ENCODE measurements at regions of chr10 and their contacts with region 1.

Region 1: GRCh38 chr10:26528715-26529393 is 90.7 kb downstream of the APBB1IP start:
- DNase-seq: no peak
- H3K4me3 ChIP-seq: no peak overlapping the region
- H3K27ac ChIP-seq: peak overlapping the region in 4 of 8 donors; percentile 60 to 76 (median 67)
- H3K4me1 ChIP-seq: peaks cover 0 to 32% (median 3%) of the 10 kb centered on the region in 6 donors
- H3K27me3 ChIP-seq: no peaks in the 10 kb centered on the region
- CTCF ChIP-seq: no peak
- POLR2A ChIP-seq: no peak

Region 2: DNA sequence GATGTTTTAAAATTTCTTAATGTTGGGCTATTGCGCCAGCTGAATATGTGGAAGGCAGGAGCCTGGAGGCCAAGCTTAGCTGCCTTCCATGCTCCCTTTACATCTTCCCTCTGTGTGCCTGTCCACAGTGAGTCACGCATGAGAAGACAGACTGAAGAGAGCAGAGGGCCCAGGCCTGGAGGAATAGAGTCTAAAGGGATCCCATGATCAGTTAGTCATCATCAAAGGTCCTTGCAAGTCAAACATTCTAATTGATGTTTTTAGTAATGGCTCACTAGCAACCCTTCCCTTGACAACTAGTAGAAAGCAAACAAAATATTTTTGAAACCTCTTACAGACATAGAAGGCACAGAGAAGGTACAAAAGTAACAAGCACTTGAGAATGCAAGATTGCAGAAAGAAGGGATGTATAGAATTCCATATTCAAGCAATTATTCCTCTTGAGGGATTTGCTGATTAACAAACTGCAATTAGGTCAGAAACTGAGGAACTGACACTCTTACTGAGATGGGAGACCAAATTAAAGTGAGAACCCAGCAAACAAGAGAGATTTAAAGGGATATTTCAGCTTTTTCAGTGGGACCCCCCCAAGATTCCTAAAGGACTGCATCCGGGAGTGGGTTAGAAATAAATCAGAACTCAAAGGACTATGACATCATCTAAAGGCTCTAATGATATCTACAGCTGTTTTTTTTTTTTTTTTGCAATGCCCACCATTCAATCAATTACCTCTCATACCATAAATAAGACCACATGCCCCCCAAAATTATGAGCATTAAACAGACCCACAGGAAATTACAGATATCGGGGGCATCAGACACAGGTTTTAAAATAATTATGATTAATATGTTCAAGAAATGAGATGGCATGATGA is 121.2 kb before region 1 on chr10:
- intact Hi-C with region 1: loop called (anchors 10 kb)
- DNase-seq: no peak
- H3K4me3 ChIP-seq: no peak overlapping the region
- H3K27ac ChIP-seq: no peak overlapping the region
- H3K4me1 ChIP-seq: peaks cover 0 to 11% (median 0%) of the 10 kb centered on the region in 6 donors
- H3K27me3 ChIP-seq: no peaks in the 10 kb centered on the region
- CTCF ChIP-seq: no peak
- POLR2A ChIP-seq: no peak

Region 3: GRCh38 chr10:26642896-26643653 is 114.2 kb after region 1 on chr10:
- intact Hi-C with region 1: no loop called
- DNase-seq: no peak
- H3K4me3 ChIP-seq: no peak overlapping the region
- H3K27ac ChIP-seq: no peak overlapping the region
- H3K4me1 ChIP-seq: no peaks in the 10 kb centered on the region
- H3K27me3 ChIP-seq: no peaks in the 10 kb centered on the region
- CTCF ChIP-seq: no peak
- POLR2A ChIP-seq: no peak

Region 4: GRCh38 chr10:26755443-26755903 is 226.6 kb after region 1 on chr10:
- intact Hi-C with region 1: no loop called
- DNase-seq: no peak
- H3K4me3 ChIP-seq: no peak overlapping the region
- H3K27ac ChIP-seq: peak overlapping the region in 5 of 8 donors; percentile 12 to 65 (median 28)
- H3K4me1 ChIP-seq: peaks cover 0 to 15% (median 9%) of the 10 kb centered on the region in 6 donors
- H3K27me3 ChIP-seq: no peaks in the 10 kb centered on the region
- CTCF ChIP-seq: no peak
- POLR2A ChIP-seq: no peak

Measured in spleen (tissue), 13 donors.